AG04449 (cell line): ENCODE measurements at regions of chr5 and their contacts with region 1.

Region 1: GRCh38 chr5:172845576-172845975 is 11.5 kb downstream of the ERGIC1 start:
- DNase-seq: no peak
- H3K4me3 ChIP-seq: no peak overlapping the region
- CTCF ChIP-seq: no peak

Region 2: GRCh38 chr5:172777881-172778814 is 67.4 kb before region 1 on chr5:
- CTCF ChIA-PET with region 1: no interaction called
- POLR2A ChIA-PET with region 1: no interaction called
- DNase-seq: no peak
- H3K4me3 ChIP-seq: no peak overlapping the region
- CTCF ChIP-seq: no peak

Region 3: DNA sequence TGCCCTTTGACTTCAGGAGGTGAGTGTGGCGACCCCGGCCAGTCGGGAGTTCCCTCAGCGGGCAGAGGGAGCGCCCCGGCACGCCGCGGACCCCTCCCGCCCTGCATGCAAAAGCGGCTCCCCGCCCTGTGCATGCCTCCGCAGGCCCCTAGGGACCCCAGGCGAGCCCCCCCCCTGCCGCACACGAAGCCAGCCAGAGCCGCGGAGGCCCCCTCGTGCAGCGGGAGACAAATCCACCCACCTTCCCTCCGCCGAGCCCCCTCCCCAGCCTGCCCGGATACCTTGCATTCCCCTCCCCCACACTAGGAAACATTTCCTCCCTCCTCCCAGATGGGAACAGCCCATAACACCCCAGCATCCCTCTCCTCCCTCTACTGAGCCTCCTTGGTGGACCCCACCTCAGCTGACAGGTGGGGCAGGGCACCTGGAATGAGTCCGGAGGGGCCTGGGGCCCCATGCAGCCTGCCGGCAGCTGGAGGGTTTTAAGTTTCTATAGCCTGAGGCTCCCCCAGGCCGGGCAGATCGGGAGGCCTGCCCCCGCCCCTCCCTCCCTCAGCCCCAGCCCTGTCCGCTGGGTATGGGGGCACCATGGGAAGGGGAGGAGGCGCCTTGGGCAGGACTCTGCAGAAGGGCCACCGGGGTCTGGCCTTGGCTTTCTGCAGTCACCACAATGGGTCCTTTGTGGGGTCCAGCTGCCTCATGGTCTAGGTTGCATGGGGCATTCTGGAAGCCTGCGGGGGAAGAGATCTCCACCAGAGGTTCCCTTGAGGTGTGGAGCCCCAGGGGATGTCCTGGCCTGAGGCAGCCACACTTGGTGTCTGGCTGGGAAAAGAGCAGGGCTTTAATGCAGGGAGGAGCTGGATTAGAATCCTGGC is 10.9 kb before region 1 on chr5:
- CTCF ChIA-PET with region 1: interaction called, 10 read pairs
- POLR2A ChIA-PET with region 1: no interaction called
- DNase-seq: no peak
- H3K4me3 ChIP-seq: peak overlapping the region; percentile 91
- CTCF ChIP-seq: no peak